Prostate gland (tissue), 2 donors: ENCODE measurements at regions of chr19 and their contacts with region 1.

Region 1: DNA sequence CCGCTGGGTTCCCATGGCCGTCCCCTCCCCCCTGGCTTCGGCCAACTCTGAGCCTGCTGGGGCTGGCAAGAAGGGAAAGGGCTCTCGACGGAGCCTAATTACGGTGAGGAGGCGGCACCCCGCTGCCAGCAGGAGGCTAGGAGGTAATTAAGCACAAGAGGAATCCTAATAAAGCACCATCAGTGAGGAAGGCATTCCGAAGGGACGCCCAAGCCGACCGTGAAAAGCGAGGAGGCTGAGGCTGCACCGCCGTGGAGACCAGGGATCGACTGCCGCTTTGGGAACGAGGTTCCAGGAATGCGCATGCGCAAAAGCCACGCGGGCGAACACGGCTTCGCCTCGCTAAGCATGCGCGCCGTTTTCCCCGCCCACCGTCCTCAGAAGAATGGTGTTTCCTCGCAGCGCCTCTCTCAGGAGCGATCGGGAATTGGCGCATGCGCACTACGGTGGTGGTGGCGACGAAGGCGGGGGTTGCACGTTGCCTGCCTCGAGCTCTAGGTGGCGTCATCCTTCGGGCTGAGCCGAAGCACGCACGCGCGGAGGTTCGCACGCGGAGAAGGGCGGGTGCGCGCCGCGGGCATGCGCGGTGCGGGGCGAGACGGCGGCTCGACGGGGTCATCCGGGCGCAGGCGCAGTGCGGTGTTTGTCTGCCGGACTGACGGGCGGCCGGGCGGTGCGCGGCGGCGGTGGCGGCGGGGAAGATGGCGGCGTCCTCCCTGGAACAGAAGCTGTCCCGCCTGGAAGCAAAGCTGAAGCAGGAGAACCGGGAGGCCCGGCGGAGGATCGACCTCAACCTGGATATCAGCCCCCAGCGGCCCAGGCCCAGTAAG is at the start of gene MAP2K7:
- DNase-seq: peak; percentile 99
- H3K4me3 ChIP-seq: peak within 1 kb of the TSS; percentile 90 to 95
- H3K27ac ChIP-seq: peak within 1 kb of the TSS; percentile 88 to 93
- H3K4me1 ChIP-seq: peaks cover 15% of the 10 kb centered on the region
- H3K27me3 ChIP-seq: no peaks in the 10 kb centered on the region
- CTCF ChIP-seq: peak; percentile 23 to 98 (median 91)
- POLR2A ChIP-seq: peak; percentile 84
- total RNA-seq, gene MAP2K7: 21.6 to 45.2 TPM

Region 2: DNA sequence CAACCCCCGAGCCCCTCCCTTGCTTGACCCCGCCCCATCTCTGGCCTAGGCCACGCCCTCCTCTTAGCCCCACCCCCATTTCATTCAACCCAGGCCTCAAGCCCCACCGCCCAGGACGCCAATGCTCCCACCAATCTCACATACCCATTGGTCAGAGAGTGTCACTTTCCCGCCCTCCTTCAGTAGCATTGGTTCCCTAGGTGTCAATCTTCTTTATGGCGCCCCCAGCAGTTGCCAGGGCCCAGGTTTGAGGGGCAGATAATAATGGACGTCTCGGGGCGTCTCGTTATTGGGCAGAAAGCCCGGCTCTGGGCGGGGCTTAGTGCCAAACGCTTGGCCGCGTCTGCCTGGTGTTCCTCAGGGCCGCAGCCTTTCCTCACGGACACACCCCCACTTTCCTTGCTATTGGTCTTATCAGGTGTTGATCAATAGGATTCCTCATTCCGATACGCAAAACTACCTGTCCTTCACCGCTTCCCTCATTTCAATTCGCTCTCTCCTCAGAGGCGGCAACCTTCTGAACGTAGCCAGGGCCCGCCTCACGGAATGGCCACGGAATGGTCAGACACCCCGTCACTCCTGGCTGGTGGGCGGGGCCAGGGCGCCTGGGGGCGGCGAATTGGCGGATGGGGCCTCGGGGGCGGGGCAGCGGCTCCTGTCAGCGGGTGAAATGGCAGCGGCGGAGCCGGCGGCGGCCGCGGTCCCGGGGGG is 73.7 kb before region 1 on chr19 and contains the start of gene EVI5L:
- intact Hi-C with region 1: loop called (anchors 5 kb)
- DNase-seq: peak; percentile 99
- H3K4me3 ChIP-seq: peak within 1 kb of the TSS; percentile 73 to 91
- H3K27ac ChIP-seq: peak within 1 kb of the TSS in 1 of 2 donors; percentile 19
- H3K4me1 ChIP-seq: peaks cover 5% of the 10 kb centered on the region
- H3K27me3 ChIP-seq: no peaks in the 10 kb centered on the region
- CTCF ChIP-seq: peak in 1 of 4 experiments; percentile 4
- POLR2A ChIP-seq: no peak
- total RNA-seq, gene EVI5L: 24.0 to 25.7 TPM